Gastrocnemius medialis (tissue), 4 donors: ENCODE measurements at regions of chr17 and their contacts with region 1.

Region 1: DNA sequence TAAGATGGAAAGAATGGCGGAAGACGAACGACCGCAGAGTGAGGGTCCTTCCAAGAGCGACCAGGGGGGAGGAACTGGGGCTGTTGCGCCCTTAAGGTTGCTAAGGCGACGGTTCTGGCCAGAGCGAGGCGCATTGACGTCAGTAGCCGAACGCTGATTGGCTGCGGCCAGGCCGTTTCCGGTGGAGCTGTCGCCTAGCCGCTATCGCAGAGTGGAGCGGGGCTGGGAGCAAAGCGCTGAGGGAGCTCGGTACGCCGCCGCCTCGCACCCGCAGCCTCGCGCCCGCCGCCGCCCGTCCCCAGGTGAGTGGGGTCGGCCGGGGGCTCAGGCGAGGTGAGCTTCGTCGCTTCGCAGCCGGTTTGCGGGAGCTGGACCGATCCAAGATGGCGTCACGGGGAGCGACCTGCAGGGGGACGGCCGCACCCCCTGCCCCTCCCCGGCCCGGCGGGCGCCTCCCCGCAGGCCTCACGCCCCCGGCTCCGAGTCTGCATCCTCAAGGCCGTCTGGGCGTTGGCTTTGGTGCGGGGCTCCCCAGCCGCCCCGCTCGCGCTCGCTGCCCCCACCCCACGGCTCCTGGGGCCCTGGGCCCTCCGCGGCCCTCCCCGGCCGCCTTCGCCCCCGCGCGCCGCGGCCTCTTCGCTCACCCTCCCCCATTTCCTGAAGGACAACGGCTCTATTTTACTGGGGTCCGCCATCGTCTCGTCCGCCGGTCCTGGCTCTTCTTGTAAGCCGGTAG is at the start of gene PRKAR1A:
- DNase-seq: peak; percentile 92 to 94
- ATAC-seq: peak; percentile 73 to 81
- H3K4me3 ChIP-seq: peak within 1 kb of the TSS; percentile 78 to 89 (median 84)
- H3K27ac ChIP-seq: peak within 1 kb of the TSS; percentile 94 to 99 (median 96)
- H3K4me1 ChIP-seq: peaks cover 48 to 55% of the 10 kb centered on the region in 2 donors
- H3K27me3 ChIP-seq: no peaks in the 10 kb centered on the region
- CTCF ChIP-seq: peak in 2 of 5 experiments; percentile 17 to 18
- POLR2A ChIP-seq: peak; percentile 96 to 97
- total RNA-seq, gene PRKAR1A: 271 to 656 (median 557) TPM

Region 2: GRCh38 chr17:67993596-67994361 is 518.6 kb before region 1 on chr17:
- in situ Hi-C with region 1: no loop called
- intact Hi-C with region 1: loop called (anchors 1 kb)
- DNase-seq: peak; percentile 66 to 80
- ATAC-seq: peak; percentile 79 to 82
- H3K4me3 ChIP-seq: peak overlapping the region; percentile 70 to 86 (median 83)
- H3K27ac ChIP-seq: peak overlapping the region; percentile 94 to 96 (median 94)
- H3K4me1 ChIP-seq: peaks cover 11 to 18% of the 10 kb centered on the region in 2 donors
- H3K27me3 ChIP-seq: no peaks in the 10 kb centered on the region
- CTCF ChIP-seq: no peak
- POLR2A ChIP-seq: peak; percentile 67 to 75

Region 3: DNA sequence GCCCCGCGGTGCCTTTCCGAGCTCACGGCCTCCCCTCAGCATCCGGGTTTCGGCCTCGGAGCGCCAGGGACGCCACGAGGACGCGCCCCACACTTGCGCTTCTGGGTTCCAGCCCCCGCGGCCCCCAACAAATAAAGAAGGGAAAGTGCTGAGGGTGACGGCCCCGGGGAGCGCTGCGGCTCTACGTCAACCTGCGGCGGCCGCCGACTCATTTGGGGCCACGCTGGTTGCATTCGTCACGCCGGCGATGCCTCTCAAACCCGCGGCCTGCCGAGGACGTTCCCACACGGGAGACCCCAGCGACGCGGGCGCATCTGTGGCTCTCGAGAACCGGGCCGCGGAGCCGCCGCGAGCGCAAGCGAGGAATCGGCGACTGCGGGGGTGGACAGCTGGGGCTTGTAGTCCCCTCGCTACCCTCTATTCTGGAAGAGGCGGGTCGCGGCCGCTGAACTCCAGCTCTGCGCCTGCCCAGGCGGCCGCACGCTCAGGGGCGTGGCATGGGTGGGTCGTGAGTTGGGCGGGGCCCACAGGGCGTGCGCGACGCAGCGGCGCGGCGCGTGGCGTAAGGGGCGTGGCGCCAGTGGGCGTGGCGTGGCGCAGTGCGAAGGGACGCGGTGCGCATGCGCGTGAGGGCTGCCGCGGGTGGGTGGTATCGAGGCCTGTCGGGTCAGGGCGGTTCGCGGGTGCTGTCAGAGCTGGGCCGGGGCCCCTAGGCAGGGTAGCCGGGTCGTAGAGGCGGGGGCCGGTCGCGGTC is 264.8 kb before region 1 on chr17 and contains the start of gene AMZ2:
- in situ Hi-C with region 1: no loop called
- intact Hi-C with region 1: loop called (anchors 5 kb)
- DNase-seq: peak; percentile 84 to 92
- ATAC-seq: peak; percentile 91
- H3K4me3 ChIP-seq: peak within 1 kb of the TSS; percentile 81 to 97 (median 96)
- H3K27ac ChIP-seq: peak within 1 kb of the TSS; percentile 89 to 100 (median 98)
- H3K4me1 ChIP-seq: peaks cover 12 to 14% of the 10 kb centered on the region in 2 donors
- H3K27me3 ChIP-seq: no peaks in the 10 kb centered on the region
- CTCF ChIP-seq: peak in 1 of 5 experiments; percentile 12
- POLR2A ChIP-seq: peak; percentile 97 to 98
- total RNA-seq, gene AMZ2: 47.6 to 86.9 (median 61.8) TPM

Region 4: DNA sequence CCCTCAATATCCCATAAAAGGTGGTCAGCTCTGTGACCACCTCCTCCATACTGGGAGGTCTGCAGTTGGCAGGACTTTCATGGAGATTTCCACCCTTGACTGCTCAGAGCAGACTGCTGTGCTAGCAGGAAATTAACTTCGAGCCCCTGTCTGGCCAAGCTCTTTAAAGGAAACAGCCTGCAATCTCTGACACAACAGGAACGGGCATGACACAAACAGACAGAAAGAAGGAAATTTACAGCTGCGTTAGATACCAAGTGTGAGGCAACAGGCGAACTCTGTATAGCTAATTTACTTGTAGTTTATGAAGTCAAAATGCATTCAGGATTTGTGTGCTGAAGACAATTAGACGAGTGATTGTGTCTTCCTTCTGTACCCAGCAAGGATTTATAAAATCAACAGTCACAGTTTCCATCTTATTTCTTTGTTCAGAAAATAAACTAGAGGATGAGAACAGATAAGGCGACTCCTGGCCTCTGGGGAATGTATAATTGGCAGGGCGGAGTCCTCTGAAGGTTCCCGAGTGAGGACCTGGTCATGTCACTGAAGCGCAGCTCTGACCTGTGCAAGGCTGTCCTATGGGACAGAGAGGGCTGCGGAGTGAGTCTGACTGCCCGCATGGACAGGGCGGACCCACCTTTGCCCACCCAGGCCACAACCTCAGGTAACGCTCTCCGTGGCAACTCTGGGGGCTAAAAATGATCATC is 71.2 kb before region 1 on chr17:
- in situ Hi-C with region 1: loop called in 1 of 4 experiments (anchors 10 kb)
- intact Hi-C with region 1: no loop called
- DNase-seq: no peak
- ATAC-seq: no peak
- H3K4me3 ChIP-seq: no peak overlapping the region
- H3K27ac ChIP-seq: peak overlapping the region; percentile 75 to 100 (median 95)
- H3K4me1 ChIP-seq: peaks cover 47 to 51% of the 10 kb centered on the region in 2 donors
- H3K27me3 ChIP-seq: no peaks in the 10 kb centered on the region
- CTCF ChIP-seq: no peak
- POLR2A ChIP-seq: no peak

Region 5: DNA sequence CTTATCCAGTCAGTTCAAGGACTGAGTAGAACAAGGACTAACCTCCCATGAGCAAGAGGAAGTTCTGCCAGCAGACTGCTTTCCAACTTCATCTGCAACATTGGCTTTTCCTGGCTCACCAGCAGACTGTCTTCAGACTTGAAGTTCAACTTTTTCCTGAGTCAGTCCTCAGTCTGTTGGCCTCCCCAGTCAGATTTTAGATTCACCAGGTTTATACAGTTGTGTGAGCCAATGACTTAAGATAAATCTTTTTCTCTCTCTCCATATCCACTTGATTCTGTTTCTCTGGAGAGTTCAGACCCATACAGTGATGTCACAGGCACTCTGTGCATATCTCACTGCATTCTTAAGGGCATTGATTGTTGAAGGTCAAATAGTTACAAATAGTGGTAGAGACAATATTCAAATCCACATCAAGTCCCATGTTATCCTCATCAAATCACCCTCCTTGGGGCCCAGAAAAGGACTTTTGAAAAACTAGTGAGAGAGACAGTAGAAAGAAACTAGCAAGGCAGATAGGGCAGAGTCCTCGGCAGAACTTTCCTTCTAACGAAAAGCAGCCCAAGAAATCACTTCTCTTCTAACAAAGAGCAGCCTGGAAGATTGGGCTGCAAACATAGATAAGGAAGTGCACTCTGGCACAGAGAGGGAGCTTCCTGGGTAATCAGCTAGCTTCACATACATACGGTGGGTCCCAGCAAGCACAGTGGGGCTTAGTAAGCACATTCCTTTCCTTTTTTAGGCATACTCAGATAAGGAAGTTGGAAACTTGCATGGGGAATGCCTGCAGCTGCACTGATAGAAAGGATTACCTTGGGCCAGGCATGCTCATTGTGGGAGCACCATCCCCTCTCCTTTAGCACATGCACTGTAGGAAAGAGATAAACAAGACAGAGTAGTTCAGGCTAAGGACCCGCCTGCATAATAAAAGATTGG is 221.1 kb after region 1 on chr17:
- in situ Hi-C with region 1: no loop called
- intact Hi-C with region 1: no loop called
- DNase-seq: peak; percentile 6 to 32
- ATAC-seq: peak in 1 of 2 donors; percentile 41
- H3K4me3 ChIP-seq: no peak overlapping the region
- H3K27ac ChIP-seq: peak overlapping the region in 1 of 4 donors; percentile 18
- H3K4me1 ChIP-seq: peaks cover 4% of the 10 kb centered on the region in 2 donors
- H3K27me3 ChIP-seq: no peaks in the 10 kb centered on the region
- CTCF ChIP-seq: no peak
- POLR2A ChIP-seq: no peak